Activated naive CD8-positive, alpha-beta T cell treated with anti-CD3 and anti-CD28 coated beads, Interleukin-2, amount 10 ng/mL, durations not matched to agents 7 days and 5 days (primary cell): ENCODE measurements at regions of chr1 and their contacts with region 1.

Region 1: DNA sequence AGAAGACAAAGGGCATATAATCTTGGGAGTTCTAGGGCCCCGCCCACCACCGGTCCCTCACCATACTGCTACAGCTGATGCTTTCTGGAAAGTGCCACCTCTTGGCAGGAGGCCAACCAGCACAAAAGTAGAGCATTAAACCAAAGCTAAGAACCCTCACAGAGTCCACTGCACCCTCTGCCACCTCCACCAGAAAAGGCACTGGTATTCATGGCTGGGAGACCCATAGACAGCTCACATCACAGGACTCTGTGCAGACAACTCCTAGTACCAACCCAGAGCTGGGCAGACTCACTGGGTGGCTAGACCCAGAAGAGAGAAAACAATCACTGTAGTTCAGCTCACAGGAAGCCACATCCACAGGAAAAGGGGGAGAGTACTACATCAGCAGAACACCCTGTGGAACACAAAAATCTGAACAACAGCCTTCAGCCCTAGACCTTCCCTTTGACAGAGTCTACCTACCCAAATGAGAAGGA is 10.8 kb downstream of the THEM4 start:
- DNase-seq: peak; percentile 51
- ATAC-seq: peak; percentile 85
- H3K4me3 Mint-ChIP-seq: peak overlapping the region; percentile 73
- H3K27ac Mint-ChIP-seq: peak overlapping the region; percentile 90
- H3K4me1 Mint-ChIP-seq: peaks cover 46% of the 10 kb centered on the region
- H3K27me3 Mint-ChIP-seq: no peaks in the 10 kb centered on the region

Region 2: GRCh38 chr1:151909150-151910149 is 10.9 kb after region 1 on chr1 and contains the start of gene THEM4:
- POLR2A ChIA-PET with region 1: interaction called, 32 read pairs
- DNase-seq: peak; percentile 95
- ATAC-seq: peak; percentile 91
- H3K4me3 Mint-ChIP-seq: peak within 1 kb of the TSS; percentile 86
- H3K27ac Mint-ChIP-seq: peak within 1 kb of the TSS; percentile 83
- H3K4me1 Mint-ChIP-seq: peaks cover 26% of the 10 kb centered on the region
- H3K27me3 Mint-ChIP-seq: peaks cover 2% of the 10 kb centered on the region
- total RNA-seq, gene THEM4: 46.6 to 49.7 TPM

Region 3: GRCh38 chr1:151920149-151920548 is 21.6 kb after region 1 on chr1:
- POLR2A ChIA-PET with region 1: no interaction called
- DNase-seq: no peak
- ATAC-seq: no peak
- H3K4me3 Mint-ChIP-seq: no peak overlapping the region
- H3K27ac Mint-ChIP-seq: no peak overlapping the region
- H3K4me1 Mint-ChIP-seq: peaks cover 7% of the 10 kb centered on the region
- H3K27me3 Mint-ChIP-seq: peaks cover 3% of the 10 kb centered on the region

Region 4: GRCh38 chr1:152473887-152474537 is 575.5 kb after region 1 on chr1:
- POLR2A ChIA-PET with region 1: no interaction called
- DNase-seq: no peak
- ATAC-seq: no peak
- H3K4me3 Mint-ChIP-seq: no peak overlapping the region
- H3K27ac Mint-ChIP-seq: no peak overlapping the region
- H3K4me1 Mint-ChIP-seq: peaks cover 1% of the 10 kb centered on the region
- H3K27me3 Mint-ChIP-seq: peaks cover 3% of the 10 kb centered on the region